ENCODE measurements at regions of chr10 and their contacts with region 1.

Region 1: DNA sequence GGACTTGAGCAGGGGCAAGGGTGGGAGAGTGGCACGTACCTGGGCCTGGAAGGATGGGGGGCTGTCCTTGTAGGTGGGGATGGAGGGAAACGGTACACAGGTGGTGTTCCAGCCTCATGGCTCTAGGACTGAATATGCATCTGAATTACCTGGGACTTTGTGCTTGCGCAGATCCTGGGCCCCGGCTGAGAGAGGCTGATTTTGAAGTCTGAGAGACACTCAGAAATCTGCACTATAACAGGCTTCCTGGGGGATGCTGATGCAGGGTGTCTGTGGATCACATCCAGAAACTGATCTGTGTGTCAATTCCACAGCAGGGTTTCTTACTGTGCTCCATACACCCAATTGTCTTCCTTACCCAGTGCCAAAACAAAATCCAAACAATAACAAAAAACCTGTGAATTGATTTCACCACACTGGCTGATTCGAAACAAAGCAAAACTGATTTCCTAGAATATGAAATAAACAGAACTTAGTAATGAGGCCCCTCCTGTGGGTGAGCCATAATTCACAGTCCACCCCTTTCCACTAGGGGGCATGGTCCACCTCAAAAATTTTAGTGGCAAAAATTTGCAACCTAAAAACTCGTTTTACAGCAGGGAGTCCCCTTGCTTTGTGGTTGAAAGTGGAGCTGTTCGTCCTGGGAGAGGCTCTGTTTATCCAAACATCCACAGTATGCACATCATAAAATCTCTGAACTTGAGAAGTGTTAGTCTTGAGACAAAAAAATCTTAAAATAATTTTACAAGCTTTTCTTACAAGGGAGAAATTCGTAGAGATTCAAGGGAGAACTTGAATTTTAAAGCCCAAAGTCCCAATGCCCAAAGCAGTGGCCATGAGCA is 32.0 kb upstream of the PLEKHA1 start:
- DNase-seq: no peak
- H3K4me3 ChIP-seq: no peak overlapping the region
- H3K27ac ChIP-seq: no peak overlapping the region
- H3K4me1 ChIP-seq: peaks cover 0 to 3% (median 0%) of the 10 kb centered on the region in 4 donors
- H3K27me3 ChIP-seq: no peaks in the 10 kb centered on the region
- CTCF ChIP-seq: peak; percentile 82 to 88

Region 2: DNA sequence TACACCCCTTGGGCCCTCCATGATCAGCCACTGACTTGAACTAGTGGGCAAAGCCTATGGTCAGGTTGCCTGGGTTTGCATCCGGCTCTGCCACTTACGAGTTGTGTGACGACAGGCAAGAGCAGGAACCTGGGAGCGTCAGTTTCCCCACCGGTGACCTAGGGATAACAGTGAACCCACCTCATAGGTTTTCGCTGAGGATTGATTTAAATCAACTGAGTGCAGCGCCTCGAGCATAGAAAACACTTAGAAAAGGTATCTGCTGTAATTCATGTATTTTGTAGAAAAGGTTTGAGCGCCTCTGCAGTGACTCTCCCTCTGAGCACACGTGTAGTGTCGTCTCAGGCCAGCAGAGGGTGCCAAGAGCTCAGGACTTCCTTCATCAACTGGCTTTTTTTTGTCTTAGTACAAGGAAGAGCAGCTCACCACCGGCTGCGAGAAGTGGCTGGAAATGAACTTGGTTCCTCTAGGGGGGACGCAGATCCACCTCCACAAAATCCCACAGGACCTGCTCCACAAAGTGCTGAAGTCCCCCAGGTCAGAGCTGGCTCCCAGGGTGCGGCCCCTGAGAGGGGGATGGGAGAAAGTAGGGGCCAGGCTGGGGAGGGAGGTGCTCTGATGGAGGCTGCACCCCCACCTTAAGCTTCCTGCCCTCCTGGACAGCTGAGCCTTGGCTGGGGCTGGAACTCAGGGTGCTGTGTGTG is 43.8 kb before region 1 on chr10:
- intact Hi-C with region 1: loop called (anchors 5 kb)
- DNase-seq: peak; percentile 71 to 83
- H3K4me3 ChIP-seq: peak overlapping the region in 1 of 2 donors; percentile 13
- H3K27ac ChIP-seq: no peak overlapping the region
- H3K4me1 ChIP-seq: peaks cover 0 to 4% (median 0%) of the 10 kb centered on the region in 4 donors
- H3K27me3 ChIP-seq: peaks cover 0 to 6% of the 10 kb centered on the region in 2 donors
- CTCF ChIP-seq: peak; percentile 92 to 95

Region 3: DNA sequence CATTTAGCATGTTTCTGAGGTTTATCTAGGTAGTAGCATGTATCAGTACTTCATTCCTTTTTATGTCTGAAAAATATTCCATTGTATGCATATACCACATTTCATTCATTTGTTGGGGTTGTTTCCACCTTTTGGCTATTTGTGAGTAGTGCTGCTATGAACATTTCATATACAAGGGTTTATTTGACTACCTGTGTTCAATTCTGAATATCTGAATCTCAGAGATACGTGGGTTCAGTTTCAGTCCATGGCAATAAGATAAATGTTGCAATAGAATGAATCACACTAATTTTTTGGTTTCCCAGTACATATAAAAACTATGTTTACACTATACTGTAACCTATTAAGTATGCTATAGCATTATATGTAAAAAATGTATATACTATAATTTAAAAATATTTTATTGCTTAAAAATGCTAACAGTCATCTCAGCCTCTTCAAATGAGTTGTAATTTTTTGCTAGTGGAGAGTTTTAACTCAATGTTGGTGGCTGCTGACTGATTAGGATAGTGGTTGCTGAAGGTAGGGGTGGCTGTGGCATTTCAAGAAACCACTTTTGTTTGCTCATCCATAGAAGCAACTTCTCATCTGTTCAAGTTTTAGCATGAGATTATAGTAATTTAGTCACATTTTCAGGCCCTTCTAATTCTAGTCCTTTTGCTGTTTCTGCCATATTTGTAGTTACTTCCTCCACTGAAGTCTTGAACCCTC is 45.9 kb after region 1 on chr10:
- intact Hi-C with region 1: loop called (anchors 2 kb)
- DNase-seq: no peak
- H3K4me3 ChIP-seq: no peak overlapping the region
- H3K27ac ChIP-seq: no peak overlapping the region
- H3K4me1 ChIP-seq: peaks cover 0 to 23% (median 3%) of the 10 kb centered on the region in 4 donors
- H3K27me3 ChIP-seq: no peaks in the 10 kb centered on the region
- CTCF ChIP-seq: no peak

Region 4: GRCh38 chr10:122435212-122435827 is 92.8 kb after region 1 on chr10:
- intact Hi-C with region 1: loop called (anchors 5 kb)
- DNase-seq: no peak
- H3K4me3 ChIP-seq: no peak overlapping the region
- H3K27ac ChIP-seq: no peak overlapping the region
- H3K4me1 ChIP-seq: no peaks in the 10 kb centered on the region
- H3K27me3 ChIP-seq: no peaks in the 10 kb centered on the region
- CTCF ChIP-seq: peak; percentile 55 to 80

Region 5: DNA sequence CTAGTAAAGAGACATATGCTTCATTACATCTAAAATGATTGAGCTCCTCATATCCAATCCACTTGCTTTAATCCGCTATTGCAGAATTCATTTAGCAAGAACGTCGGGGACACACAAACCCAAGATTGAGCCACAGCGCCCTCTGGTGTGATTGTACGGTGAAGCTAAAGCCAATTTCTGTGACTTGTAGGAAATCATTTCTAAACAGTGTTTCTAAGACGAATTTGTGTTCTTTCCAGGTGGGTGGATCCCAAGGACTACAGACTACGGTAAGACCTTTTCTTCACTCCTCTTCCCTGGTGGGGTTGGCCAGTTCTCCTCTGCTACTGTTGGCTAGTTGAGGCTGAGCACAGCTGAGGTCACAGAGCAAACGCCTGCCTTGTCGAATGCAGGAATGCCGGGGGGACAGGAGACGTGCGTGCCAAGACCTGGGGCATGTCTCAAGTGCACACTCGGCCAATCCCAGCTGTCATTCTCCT is 223.3 kb after region 1 on chr10:
- intact Hi-C with region 1: loop called (anchors 5 kb)
- DNase-seq: peak; percentile 83 to 84
- H3K4me3 ChIP-seq: peak overlapping the region; percentile 11 to 33
- H3K27ac ChIP-seq: no peak overlapping the region
- H3K4me1 ChIP-seq: peaks cover 0 to 8% (median 5%) of the 10 kb centered on the region in 4 donors
- H3K27me3 ChIP-seq: peaks cover 0 to 4% of the 10 kb centered on the region in 2 donors
- CTCF ChIP-seq: peak; percentile 86

Measured in tibial artery (tissue), 4 donors.